HEK293T (cell line): ENCODE measurements at regions of chr6 and their contacts with region 1.

Region 1: DNA sequence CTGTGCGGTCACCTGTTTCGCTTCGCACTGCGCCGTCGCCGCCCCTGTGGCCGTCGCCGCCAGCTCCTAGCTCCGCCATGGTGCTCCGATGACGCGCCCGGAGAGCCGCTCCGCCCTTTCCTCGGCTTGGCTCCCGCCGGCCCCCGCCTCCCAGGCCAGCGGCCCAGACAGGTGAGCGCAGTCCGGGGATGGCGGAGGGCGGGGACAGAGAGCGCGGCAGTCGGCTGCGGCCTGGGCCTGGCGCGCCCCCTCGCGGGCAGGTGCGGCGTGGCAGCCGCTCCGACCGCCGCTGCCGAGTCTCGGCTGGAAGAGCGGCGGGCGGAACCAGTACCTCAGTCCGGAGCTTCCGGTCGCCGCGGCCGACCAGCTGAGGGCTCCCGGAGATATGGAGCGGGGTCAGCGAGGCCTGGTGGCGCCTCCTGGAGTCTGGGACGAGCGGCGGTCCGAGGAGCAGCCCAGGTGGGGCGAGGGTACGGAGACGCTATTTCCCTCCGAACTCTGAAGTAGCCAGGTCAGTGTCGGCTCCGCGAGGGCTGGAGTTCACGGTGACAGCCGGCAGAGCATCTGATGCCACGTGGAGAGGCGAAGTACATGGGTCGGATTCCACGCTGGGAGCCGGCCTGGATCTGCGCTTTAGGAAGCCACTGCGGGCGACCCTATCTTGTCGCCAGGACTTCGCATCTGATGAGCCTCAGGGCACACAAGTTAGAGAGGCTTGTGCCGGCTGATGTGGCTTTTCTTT is at the start of gene MAP7:
- DNase-seq: peak; percentile 84

Region 2: GRCh38 chr6:136341967-136342366 is 208.5 kb before region 1 on chr6:
- CTCF ChIA-PET with region 1: interaction called, 23 read pairs
- POLR2A ChIA-PET with region 1: interaction called, 5 read pairs
- DNase-seq: peak; percentile 38

Region 3: GRCh38 chr6:136494710-136495109 is 55.8 kb before region 1 on chr6:
- CTCF ChIA-PET with region 1: no interaction called
- POLR2A ChIA-PET with region 1: no interaction called
- DNase-seq: no peak

Region 4: DNA sequence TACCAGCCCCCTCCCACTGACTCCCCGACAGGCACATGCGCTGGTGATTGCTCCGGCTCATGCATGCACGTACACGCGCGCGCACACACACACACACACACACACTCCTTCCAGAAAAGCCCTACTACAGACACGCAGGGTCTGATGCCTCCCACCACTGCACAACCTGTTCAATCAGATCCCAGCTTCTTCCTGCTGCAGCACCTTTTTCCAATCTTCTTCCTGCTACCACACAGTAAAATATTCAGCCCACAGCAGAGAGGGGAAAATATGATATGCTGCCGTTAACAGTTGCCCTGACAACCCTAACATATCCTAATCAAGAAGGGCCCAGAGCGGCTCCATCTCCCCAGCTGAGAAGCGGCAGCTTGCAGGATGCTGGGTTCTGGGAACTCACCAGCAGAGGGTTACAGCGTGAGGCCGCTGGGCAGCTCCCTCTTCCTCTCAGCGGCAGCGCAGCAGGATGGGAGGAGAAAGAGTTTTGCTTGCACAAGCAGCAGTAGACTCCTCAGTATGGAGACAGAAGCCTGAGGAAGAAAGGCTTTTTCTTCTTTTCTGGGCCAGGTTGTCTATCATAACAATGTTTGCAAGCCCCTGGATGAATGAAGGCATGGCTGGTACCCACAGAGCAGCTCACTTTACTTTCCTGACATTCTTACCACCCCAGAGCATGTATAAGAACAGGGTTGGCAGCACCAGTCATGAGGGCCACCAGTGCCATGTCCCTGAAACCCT is 24.1 kb before region 1 on chr6:
- CTCF ChIA-PET with region 1: interaction called, 13 read pairs
- POLR2A ChIA-PET with region 1: interaction called, 5 read pairs
- DNase-seq: peak; percentile 80

Region 5: GRCh38 chr6:136566007-136566496 is 15.6 kb after region 1 on chr6:
- CTCF ChIA-PET with region 1: interaction called, 12 read pairs
- POLR2A ChIA-PET with region 1: no interaction called
- DNase-seq: no peak